ENCODE measurements at regions of chr11 and their contacts with region 1.

Region 1: GRCh38 chr11:108664730-108665525 is at the start of gene DDX10:
- DNase-seq: peak; percentile 99
- H3K4me3 ChIP-seq: peak within 1 kb of the TSS; percentile 72 to 90 (median 81)
- H3K27ac ChIP-seq: peak within 1 kb of the TSS; percentile 68 to 81 (median 70)
- H3K4me1 ChIP-seq: peaks cover 0 to 29% (median 26%) of the 10 kb centered on the region in 4 donors
- H3K27me3 ChIP-seq: no peaks in the 10 kb centered on the region
- CTCF ChIP-seq: no peak
- EP300 ChIP-seq: peak in 1 of 4 donors; percentile 21
- POLR2A ChIP-seq: no peak
- total RNA-seq, gene DDX10: 12.8 to 41.0 (median 26.7) TPM

Region 2: GRCh38 chr11:108008656-108009496 is 656.1 kb before region 1 on chr11 and contains the start of gene CUL5:
- intact Hi-C with region 1: loop called (anchors 10 kb)
- DNase-seq: peak; percentile 96
- H3K4me3 ChIP-seq: peak within 1 kb of the TSS; percentile 83 to 99 (median 85)
- H3K27ac ChIP-seq: peak within 1 kb of the TSS; percentile 97 to 99 (median 98)
- H3K4me1 ChIP-seq: peaks cover 0 to 46% (median 37%) of the 10 kb centered on the region in 4 donors
- H3K27me3 ChIP-seq: no peaks in the 10 kb centered on the region
- CTCF ChIP-seq: peak; percentile 59 to 90 (median 80)
- EP300 ChIP-seq: peak in 1 of 4 donors; percentile 18
- POLR2A ChIP-seq: peak in 1 of 2 donors; percentile 54
- total RNA-seq, gene CUL5: 26.5 to 33.7 (median 29.6) TPM

Region 3: DNA sequence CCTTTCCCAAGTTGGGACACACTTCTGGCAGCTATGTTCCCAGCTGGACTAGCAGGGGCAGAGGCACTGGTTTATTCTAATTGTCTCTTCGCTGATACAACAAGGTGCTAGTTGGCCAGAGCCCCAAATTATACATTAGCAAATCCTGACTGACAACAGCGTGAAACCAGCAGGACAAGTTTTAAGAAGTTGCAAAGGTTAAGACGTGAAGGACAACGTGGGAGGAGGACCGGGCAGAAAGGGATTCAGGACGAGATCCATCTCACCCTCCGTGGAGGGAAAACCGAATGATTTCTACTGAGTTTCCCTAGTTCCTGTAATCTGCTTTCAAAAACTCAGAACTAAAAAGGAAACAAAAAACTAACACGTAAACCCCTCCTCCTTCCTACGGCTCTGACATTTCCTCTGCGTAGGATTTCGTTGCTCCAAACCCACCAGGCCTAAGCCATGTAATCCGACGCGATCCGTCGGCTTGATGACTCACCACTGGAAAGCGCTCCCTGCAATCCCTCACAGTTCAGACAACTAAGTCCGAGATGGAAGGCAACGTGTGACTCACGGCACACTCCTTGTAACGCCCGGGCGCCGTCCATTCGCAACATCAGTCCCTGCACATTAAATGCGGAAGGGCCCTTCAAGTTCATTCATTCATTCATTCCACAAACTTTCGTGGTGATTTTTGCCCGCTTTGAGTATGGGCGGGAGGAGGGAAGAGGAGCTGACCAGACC is 167.4 kb before region 1 on chr11:
- intact Hi-C with region 1: loop called (anchors 5 kb)
- DNase-seq: peak; percentile 96
- H3K4me3 ChIP-seq: peak overlapping the region; percentile 57 to 84 (median 74)
- H3K27ac ChIP-seq: peak overlapping the region; percentile 92 to 98 (median 96)
- H3K4me1 ChIP-seq: peaks cover 0 to 16% (median 7%) of the 10 kb centered on the region in 4 donors
- H3K27me3 ChIP-seq: no peaks in the 10 kb centered on the region
- CTCF ChIP-seq: no peak
- EP300 ChIP-seq: peak in 1 of 4 donors; percentile 28
- POLR2A ChIP-seq: peak; percentile 63 to 71